Activated CD8-positive, alpha-beta T cell treated with anti-CD3 and anti-CD28 coated beads for 36 hours (primary cell): ENCODE measurements at regions of chr1 and their contacts with region 1.

Region 1: DNA sequence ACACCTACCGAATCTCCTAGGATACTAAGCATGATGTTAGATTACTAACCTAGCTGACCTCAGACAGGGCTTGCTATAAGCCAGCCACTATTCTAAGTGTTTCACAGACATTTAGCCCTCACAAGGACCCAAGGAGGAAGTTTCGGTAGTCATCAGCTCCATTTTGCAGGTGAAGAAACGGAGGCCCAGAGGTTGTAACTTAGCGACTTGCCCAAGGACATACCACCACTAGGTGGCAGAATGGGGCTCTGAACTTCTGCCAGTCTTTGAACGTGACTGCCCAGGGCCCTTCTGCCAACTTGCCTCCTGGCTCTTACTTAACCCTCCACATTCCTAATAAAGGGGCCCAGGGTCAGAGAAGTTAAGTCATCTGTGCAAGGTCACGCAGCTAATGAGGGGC is 283.5 kb downstream of the C1orf94 start:
- DNase-seq: peak; percentile 73
- ATAC-seq: no peak
- H3K4me3 Mint-ChIP-seq: no peak overlapping the region
- H3K27ac Mint-ChIP-seq: no peak overlapping the region
- H3K4me1 Mint-ChIP-seq: no peaks in the 10 kb centered on the region
- H3K27me3 Mint-ChIP-seq: peaks cover 5% of the 10 kb centered on the region
- CTCF ChIP-seq: peak; percentile 68

Region 2: GRCh38 chr1:34441259-34442069 is 18.7 kb before region 1 on chr1:
- CTCF ChIA-PET with region 1: interaction called, 16 read pairs
- POLR2A ChIA-PET with region 1: no interaction called
- intact Hi-C with region 1: no loop called
- DNase-seq: no peak
- ATAC-seq: no peak
- H3K4me3 Mint-ChIP-seq: no peak overlapping the region
- H3K27ac Mint-ChIP-seq: no peak overlapping the region
- H3K4me1 Mint-ChIP-seq: no peaks in the 10 kb centered on the region
- H3K27me3 Mint-ChIP-seq: peaks cover 12% of the 10 kb centered on the region
- CTCF ChIP-seq: no peak

Region 3: DNA sequence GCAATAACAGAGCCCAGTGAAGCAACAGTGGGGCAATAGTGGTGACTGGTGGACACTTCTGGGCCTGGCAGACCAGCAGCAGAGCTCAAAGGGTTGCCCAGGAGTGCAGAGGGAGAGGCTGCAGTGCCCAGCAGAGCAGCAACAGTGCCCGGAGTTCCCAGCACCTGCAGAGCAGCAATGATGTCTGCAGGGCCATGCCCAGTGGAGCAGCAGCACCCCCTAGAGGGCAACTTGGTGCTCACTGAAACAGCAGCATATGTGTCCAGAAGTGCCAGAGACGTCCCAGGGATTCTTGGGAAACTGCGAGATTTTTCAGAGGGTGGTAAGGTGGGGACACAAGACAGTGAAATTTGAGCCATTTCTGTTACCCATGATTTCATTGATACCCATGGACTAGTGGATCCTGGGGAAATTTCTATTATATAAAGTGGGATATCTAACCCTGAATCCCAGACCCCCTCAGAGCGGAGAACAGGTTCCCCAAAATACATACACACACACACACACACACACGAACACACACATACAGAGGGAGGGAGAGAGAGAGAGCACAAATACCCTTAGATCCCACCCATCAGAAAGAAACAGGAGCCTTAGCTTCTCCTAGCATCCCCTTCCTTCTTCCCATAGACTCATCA is 137.8 kb after region 1 on chr1:
- CTCF ChIA-PET with region 1: interaction called, 8 read pairs
- POLR2A ChIA-PET with region 1: no interaction called
- intact Hi-C with region 1: loop called (anchors 5 kb)
- DNase-seq: peak; percentile 78
- ATAC-seq: no peak
- H3K4me3 Mint-ChIP-seq: no peak overlapping the region
- H3K27ac Mint-ChIP-seq: no peak overlapping the region
- H3K4me1 Mint-ChIP-seq: no peaks in the 10 kb centered on the region
- H3K27me3 Mint-ChIP-seq: peaks cover 9% of the 10 kb centered on the region
- CTCF ChIP-seq: peak; percentile 66

Region 4: GRCh38 chr1:34681480-34682451 is 221.6 kb after region 1 on chr1:
- CTCF ChIA-PET with region 1: interaction called, 4 read pairs
- POLR2A ChIA-PET with region 1: no interaction called
- intact Hi-C with region 1: loop called (anchors 10 kb)
- DNase-seq: peak; percentile 72
- ATAC-seq: peak; percentile 73
- H3K4me3 Mint-ChIP-seq: no peak overlapping the region
- H3K27ac Mint-ChIP-seq: no peak overlapping the region
- H3K4me1 Mint-ChIP-seq: peaks cover 10% of the 10 kb centered on the region
- H3K27me3 Mint-ChIP-seq: peaks cover 15% of the 10 kb centered on the region
- CTCF ChIP-seq: peak; percentile 94

Region 5: DNA sequence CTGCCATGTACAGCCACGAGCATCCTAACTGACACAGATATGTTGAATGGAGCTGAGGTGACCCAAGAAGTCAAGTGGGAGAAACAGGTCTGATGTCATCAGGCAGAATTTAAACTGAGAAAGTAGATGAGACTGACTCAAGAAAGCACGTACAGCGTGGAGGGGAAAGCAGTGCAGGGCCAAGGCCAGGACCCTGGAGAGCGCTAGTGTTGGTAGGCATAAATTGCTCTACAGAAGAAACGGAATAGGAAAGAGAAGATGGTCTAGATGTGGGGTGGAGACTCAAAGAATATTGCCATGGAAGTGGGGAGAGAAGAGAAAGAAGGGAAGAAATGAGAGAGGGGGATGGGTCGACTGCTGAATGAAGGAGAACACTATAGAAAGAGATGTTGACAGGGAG is 249.4 kb after region 1 on chr1:
- CTCF ChIA-PET with region 1: no interaction called
- POLR2A ChIA-PET with region 1: no interaction called
- intact Hi-C with region 1: no loop called
- DNase-seq: peak; percentile 10
- ATAC-seq: no peak
- H3K4me3 Mint-ChIP-seq: no peak overlapping the region
- H3K27ac Mint-ChIP-seq: no peak overlapping the region
- H3K4me1 Mint-ChIP-seq: no peaks in the 10 kb centered on the region
- H3K27me3 Mint-ChIP-seq: peaks cover 2% of the 10 kb centered on the region
- CTCF ChIP-seq: no peak